ENCODE measurements at regions of chr10 and their contacts with region 1.

Region 1: DNA sequence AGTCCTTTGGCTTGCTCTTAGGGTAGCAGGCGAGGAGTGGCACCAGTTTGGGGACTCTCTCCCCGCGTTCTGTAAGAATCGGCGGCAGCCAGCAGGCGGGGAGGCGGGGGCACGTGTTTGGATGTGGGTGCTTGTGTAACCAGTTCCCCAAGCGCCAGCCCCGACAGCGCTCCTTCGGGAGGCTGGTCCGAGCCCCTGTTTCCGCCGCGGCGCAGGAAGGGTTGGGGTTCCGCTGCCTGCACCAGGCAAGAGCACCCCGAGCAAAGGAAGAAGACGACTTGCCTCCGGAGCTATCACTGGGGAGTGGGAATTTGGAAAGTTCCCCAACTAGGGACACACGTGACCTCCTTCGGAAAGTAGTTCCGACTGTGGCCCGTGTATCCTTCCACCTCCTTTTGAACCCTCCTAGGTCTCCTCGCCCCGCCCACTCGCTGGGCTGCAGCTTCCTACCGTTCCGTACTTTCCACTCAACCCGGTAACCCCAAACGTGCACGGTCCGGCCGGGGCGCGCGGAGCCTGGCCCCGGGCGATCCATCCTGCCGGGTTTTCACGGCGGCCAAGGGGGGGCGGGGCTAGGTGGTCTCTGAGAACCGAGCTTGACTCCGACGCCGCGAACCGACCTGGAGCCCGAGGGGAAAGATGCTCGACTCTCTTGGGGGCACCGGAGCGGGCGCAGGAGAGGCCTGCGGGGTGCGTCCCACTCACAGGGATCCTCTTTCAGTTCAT is 1.2 kb downstream of the KLLN start:
- DNase-seq: peak; percentile 89 to 98
- ATAC-seq: peak; percentile 71 to 82 (median 76)
- H3K4me3 ChIP-seq: peak overlapping the region; percentile 96
- H3K4me3 Mint-ChIP-seq: peak overlapping the region; percentile 100
- H3K27ac ChIP-seq: peak overlapping the region; percentile 74
- H3K27ac Mint-ChIP-seq: peak overlapping the region; percentile 95 to 97
- H3K4me1 ChIP-seq: peaks cover 11% of the 10 kb centered on the region
- H3K4me1 Mint-ChIP-seq: peaks cover 57 to 58% of the 10 kb centered on the region in 2 donors
- H3K27me3 ChIP-seq: no peaks in the 10 kb centered on the region
- H3K27me3 Mint-ChIP-seq: no peaks in the 10 kb centered on the region
- CTCF ChIP-seq: no peak

Region 2: GRCh38 chr10:87094373-87095235 is 767.5 kb before region 1 on chr10 and contains the starts of genes GLUD1 and SHLD2:
- intact Hi-C with region 1: loop called (anchors 5 kb)
- DNase-seq: peak; percentile 88 to 94
- ATAC-seq: peak; percentile 62 to 83 (median 71)
- H3K4me3 ChIP-seq: peak within 1 kb of the TSS; percentile 69
- H3K4me3 Mint-ChIP-seq: peak within 1 kb of the TSS; percentile 92
- H3K27ac ChIP-seq: peak within 1 kb of the TSS; percentile 94
- H3K27ac Mint-ChIP-seq: peak within 1 kb of the TSS; percentile 85 to 92
- H3K4me1 ChIP-seq: peaks cover 18% of the 10 kb centered on the region
- H3K4me1 Mint-ChIP-seq: peaks cover 41 to 44% of the 10 kb centered on the region in 2 donors
- H3K27me3 ChIP-seq: no peaks in the 10 kb centered on the region
- H3K27me3 Mint-ChIP-seq: no peaks in the 10 kb centered on the region
- CTCF ChIP-seq: no peak
- total RNA-seq, gene GLUD1: 102 to 115 (median 112) TPM
- total RNA-seq, gene SHLD2: 32.6 to 37.5 (median 34.1) TPM

Region 3: GRCh38 chr10:87925570-87925969 is 63.5 kb after region 1 on chr10:
- intact Hi-C with region 1: loop called (anchors 5 kb)
- DNase-seq: no peak
- ATAC-seq: no peak
- H3K4me3 ChIP-seq: no peak overlapping the region
- H3K4me3 Mint-ChIP-seq: no peak overlapping the region
- H3K27ac ChIP-seq: no peak overlapping the region
- H3K27ac Mint-ChIP-seq: peak overlapping the region; percentile 7 to 25
- H3K4me1 ChIP-seq: peaks cover 6% of the 10 kb centered on the region
- H3K4me1 Mint-ChIP-seq: peaks cover 82 to 88% of the 10 kb centered on the region in 2 donors
- H3K27me3 ChIP-seq: no peaks in the 10 kb centered on the region
- H3K27me3 Mint-ChIP-seq: no peaks in the 10 kb centered on the region
- CTCF ChIP-seq: no peak

Region 4: GRCh38 chr10:88091490-88092105 is 229.5 kb after region 1 on chr10:
- intact Hi-C with region 1: loop called (anchors 5 kb)
- DNase-seq: peak; percentile 64 to 85
- ATAC-seq: peak; percentile 92 to 98 (median 97)
- H3K4me3 ChIP-seq: no peak overlapping the region
- H3K4me3 Mint-ChIP-seq: peak overlapping the region; percentile 36
- H3K27ac ChIP-seq: peak overlapping the region; percentile 64
- H3K27ac Mint-ChIP-seq: peak overlapping the region; percentile 89 to 90
- H3K4me1 ChIP-seq: peaks cover 42% of the 10 kb centered on the region
- H3K4me1 Mint-ChIP-seq: peaks cover 56 to 65% of the 10 kb centered on the region in 2 donors
- H3K27me3 ChIP-seq: no peaks in the 10 kb centered on the region
- H3K27me3 Mint-ChIP-seq: peaks cover 0 to 15% of the 10 kb centered on the region in 2 donors
- CTCF ChIP-seq: no peak

Region 5: DNA sequence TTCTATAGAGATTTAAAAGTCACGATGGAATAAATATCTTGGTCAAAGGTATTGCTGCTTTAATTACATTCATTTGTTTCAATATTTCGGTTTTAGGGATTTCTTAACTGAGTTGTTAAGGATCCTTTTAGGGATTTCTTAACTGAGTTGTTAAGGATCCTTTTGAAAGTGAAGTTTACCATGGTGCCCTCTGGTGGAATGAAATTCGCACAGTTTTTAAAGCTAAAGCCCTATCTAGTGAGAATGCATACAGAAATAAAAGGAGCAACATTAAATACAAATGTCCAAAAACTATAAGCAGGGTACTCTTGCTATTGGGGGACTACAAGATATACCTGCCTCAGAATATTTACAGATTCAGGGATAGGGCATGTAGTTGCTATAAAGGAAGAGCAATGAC is 527.3 kb after region 1 on chr10:
- intact Hi-C with region 1: loop called (anchors 1 kb)
- DNase-seq: peak in 1 of 2 donors; percentile 75
- ATAC-seq: no peak
- H3K4me3 ChIP-seq: no peak overlapping the region
- H3K4me3 Mint-ChIP-seq: no peak overlapping the region
- H3K27ac ChIP-seq: no peak overlapping the region
- H3K27ac Mint-ChIP-seq: no peak overlapping the region
- H3K4me1 ChIP-seq: peaks cover 11% of the 10 kb centered on the region
- H3K4me1 Mint-ChIP-seq: peaks cover 0 to 17% of the 10 kb centered on the region in 2 donors
- H3K27me3 ChIP-seq: no peaks in the 10 kb centered on the region
- H3K27me3 Mint-ChIP-seq: peaks cover 0 to 5% of the 10 kb centered on the region in 2 donors
- CTCF ChIP-seq: peak; percentile 58